Caco-2 (cell line): ENCODE measurements at regions of chr21 and their contacts with region 1.

Region 1: DNA sequence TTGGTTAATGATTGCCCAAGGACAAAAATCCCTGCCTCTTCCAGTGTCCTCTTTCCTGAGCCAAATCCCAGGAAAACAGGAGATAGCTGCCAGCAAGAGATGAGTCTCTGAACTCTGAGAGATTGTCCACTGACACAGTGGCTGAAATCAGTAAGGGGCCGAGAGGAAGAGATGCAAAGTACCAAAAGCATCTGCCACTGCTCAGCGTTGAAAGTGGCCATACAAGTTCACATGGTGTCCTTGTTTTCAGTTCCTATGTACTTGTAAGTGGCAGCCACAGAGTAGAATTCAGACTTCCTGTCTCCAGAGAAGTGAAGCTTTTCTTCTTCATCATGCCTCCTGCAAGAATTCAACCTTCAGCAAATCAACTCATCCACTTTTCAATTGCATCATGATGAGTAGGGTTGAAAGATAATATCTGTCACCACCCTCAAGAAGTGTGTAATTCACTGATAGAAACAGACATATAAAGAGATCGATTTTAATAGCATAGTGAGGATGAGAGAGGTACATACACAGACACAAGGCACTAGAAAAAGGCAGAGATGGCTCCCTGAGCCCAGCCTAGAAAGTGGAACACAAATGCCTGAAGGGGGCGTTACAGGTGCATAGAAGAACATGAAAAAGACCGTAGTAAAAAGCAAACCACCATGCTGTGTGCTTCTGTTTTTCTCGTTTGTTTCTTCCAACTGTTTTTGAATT is 185.8 kb downstream of the MRPL39 start:
- DNase-seq: peak in 1 of 2 experiments; percentile 13
- H3K4me3 ChIP-seq: no peak overlapping the region
- H3K4me3 Mint-ChIP-seq: no peak overlapping the region
- H3K27ac Mint-ChIP-seq: no peak overlapping the region
- H3K4me1 ChIP-seq: no peaks in the 10 kb centered on the region
- H3K4me1 Mint-ChIP-seq: no peaks in the 10 kb centered on the region
- H3K27me3 ChIP-seq: no peaks in the 10 kb centered on the region
- H3K27me3 Mint-ChIP-seq: no peaks in the 10 kb centered on the region
- CTCF ChIP-seq: peak in 1 of 2 experiments; percentile 10

Region 2: DNA sequence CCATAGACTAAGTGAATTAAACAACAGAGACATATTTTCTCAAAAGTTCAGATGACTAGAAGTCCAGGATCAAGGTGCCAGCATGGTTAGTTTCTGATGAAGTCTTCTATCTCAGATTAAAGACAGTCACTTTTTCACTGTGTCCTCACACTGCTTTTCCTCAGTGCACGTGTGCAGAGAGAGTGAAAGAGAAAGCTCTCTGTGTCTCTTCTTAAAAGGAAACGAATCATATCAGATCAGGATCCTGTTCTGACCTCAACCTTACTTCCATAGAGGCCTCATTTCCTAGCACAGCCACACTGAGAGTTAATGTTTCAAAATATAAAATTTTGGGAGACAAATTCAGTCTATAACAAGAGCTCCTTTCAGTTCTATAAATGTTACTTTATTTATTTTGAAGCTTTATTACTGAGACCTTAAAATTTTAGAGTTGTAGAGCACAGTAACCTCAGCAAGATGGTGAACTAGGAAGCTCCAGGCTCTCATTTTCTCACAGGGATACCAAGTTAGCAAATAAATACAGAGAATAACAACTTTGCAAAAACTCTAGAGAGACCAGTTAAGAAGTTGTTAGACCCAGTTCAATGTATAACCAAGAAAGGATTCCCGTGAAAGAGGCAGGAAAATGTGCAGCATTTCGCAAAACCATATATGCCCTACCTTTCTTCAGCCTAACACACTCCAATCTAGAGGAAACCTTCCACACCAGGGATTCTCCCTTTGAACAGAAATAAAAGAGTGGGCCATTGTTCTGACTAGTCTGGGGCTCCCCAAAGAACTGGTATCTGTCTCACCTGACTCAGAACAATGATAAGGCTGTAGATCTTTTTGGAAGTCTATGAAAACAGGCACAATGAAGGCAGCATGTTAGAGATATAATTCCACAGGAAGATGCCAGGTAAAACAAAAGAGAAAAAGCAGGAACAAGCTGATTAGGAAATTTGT is 186.3 kb before region 1 on chr21:
- CTCF ChIA-PET with region 1: no interaction called
- POLR2A ChIA-PET with region 1: no interaction called
- intact Hi-C with region 1: no loop called
- DNase-seq: no peak
- H3K4me3 ChIP-seq: no peak overlapping the region
- H3K4me3 Mint-ChIP-seq: no peak overlapping the region
- H3K27ac Mint-ChIP-seq: no peak overlapping the region
- H3K4me1 ChIP-seq: no peaks in the 10 kb centered on the region
- H3K4me1 Mint-ChIP-seq: no peaks in the 10 kb centered on the region
- H3K27me3 ChIP-seq: no peaks in the 10 kb centered on the region
- H3K27me3 Mint-ChIP-seq: peaks cover 3% of the 10 kb centered on the region
- CTCF ChIP-seq: no peak

Region 3: DNA sequence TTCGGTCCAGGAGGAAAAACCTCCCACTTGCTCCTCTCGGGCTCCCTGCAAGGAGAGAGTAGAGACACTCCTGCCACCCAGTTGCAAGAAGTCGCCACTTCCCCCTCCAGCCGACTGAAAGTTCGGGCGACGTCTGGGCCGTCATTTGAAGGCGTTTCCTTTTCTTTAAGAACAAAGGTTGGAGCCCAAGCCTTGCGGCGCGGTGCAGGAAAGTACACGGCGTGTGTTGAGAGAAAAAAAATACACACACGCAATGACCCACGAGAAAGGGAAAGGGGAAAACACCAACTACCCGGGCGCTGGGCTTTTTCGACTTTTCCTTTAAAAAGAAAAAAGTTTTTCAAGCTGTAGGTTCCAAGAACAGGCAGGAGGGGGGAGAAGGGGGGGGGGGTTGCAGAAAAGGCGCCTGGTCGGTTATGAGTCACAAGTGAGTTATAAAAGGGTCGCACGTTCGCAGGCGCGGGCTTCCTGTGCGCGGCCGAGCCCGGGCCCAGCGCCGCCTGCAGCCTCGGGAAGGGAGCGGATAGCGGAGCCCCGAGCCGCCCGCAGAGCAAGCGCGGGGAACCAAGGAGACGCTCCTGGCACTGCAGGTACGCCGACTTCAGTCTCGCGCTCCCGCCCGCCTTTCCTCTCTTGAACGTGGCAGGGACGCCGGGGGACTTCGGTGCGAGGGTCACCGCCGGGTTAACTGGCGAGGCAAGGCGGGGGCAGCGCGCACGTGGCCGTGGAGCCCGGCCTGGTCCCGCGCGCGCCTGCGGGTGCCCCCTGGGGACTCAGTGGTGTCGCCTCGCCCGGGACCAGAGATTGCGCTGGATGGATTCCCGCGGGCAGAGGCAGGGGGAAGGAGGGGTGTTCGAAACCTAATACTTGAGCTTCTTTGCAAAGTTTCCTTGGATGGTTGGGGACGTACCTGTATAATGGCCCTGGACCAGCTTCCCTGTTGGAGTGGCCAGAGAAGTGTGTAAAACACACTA is 140.5 kb after region 1 on chr21:
- CTCF ChIA-PET with region 1: no interaction called
- POLR2A ChIA-PET with region 1: no interaction called
- intact Hi-C with region 1: loop called (anchors 5 kb)
- DNase-seq: peak; percentile 42 to 51
- H3K4me3 ChIP-seq: peak overlapping the region; percentile 55
- H3K4me3 Mint-ChIP-seq: peak overlapping the region; percentile 65
- H3K27ac Mint-ChIP-seq: no peak overlapping the region
- H3K4me1 ChIP-seq: 0 out of 2 replicates have a peak, but pooled peaks cover 4% of the 10 kb centered on the region
- H3K4me1 Mint-ChIP-seq: peaks cover 5% of the 10 kb centered on the region
- H3K27me3 ChIP-seq: no peaks in the 10 kb centered on the region
- H3K27me3 Mint-ChIP-seq: no peaks in the 10 kb centered on the region
- CTCF ChIP-seq: no peak